ENCODE measurements at regions of chr2 and their contacts with region 1.

Region 1: DNA sequence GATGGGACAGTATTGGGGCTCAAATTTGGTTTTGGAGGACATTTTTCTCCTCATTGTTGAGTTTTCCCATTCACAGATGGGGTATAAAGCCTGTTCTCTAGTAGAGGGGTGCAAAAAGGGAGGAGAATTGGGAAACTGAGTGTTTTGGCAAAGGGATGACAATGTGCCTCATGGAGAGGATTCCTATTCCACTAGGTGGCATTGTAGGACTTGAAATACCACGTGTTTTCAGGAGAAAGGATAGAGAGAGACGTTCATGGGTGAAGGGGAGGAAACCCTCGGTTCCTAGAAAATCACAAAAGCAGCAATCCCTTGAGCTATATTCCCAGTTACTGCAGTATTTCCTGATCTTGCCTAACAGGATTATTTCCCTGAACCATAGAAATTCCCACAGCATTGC is 113.7 kb upstream of the SRD5A2 start:
- DNase-seq: peak; percentile 20
- H3K4me3 ChIP-seq: no peak overlapping the region
- H3K27ac ChIP-seq: no peak overlapping the region
- H3K4me1 ChIP-seq: no peaks in the 10 kb centered on the region
- H3K27me3 ChIP-seq: no peaks in the 10 kb centered on the region
- CTCF ChIP-seq: peak in 1 of 2 donors; percentile 24

Region 2: GRCh38 chr2:31333527-31334183 is 360.8 kb before region 1 on chr2:
- CTCF ChIA-PET with region 1: no interaction called
- dilution Hi-C with region 1: no loop called
- in situ Hi-C with region 1: no loop called
- intact Hi-C with region 1: no loop called
- DNase-seq: peak; percentile 82
- H3K4me3 ChIP-seq: no peak overlapping the region
- H3K27ac ChIP-seq: peak overlapping the region; percentile 93
- H3K4me1 ChIP-seq: peaks cover 48% of the 10 kb centered on the region
- H3K27me3 ChIP-seq: no peaks in the 10 kb centered on the region
- CTCF ChIP-seq: peak; percentile 98 to 99

Region 3: DNA sequence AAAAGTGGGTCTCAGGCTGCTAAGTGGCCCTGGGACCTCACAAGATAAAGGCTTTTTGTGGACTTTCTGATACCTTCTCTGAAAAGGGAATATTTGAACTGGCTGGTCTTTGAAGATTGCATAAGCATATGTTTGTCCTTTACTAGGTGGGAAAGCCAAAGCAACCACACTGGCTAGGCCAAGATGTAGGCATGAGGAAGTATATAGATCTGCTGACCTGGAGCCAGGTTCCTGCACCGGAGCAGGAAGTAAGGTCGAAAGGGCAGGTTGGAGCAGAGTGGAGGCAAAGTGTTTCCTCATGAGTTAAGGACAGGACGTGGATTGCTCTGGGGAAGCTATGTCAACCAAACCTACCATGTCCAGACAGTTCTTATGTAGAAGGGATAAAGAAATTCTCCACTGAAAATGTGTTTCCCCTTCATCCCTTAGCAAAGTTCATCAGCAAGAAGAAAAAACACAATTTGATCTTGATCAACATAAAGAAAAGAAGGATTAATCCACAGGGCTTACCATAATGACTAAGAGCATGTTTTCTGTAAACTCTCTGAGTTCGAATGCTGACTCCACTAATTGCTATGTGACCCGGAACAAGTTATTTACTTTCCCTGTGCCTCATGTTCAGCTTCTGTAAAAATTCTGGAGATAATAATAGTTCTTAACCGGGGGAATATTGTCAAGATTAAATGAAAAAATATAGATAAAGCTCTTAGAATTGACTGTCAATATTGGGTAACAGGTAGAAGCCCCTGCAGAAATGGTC is 42.4 kb after region 1 on chr2:
- CTCF ChIA-PET with region 1: no interaction called
- dilution Hi-C with region 1: loop called (anchors 5 kb)
- in situ Hi-C with region 1: no loop called
- intact Hi-C with region 1: no loop called
- DNase-seq: no peak
- H3K4me3 ChIP-seq: no peak overlapping the region
- H3K27ac ChIP-seq: no peak overlapping the region
- H3K4me1 ChIP-seq: no peaks in the 10 kb centered on the region
- H3K27me3 ChIP-seq: no peaks in the 10 kb centered on the region
- CTCF ChIP-seq: no peak